IMR-90 (cell line): ENCODE measurements at regions of chr17 and their contacts with region 1.

Region 1: GRCh38 chr17:81187586-81188490 is 21.8 kb upstream of the AATK start:
- DNase-seq: no peak
- ATAC-seq: no peak
- H3K4me3 ChIP-seq: no peak overlapping the region
- H3K27ac ChIP-seq: no peak overlapping the region
- H3K4me1 ChIP-seq: no peaks in the 10 kb centered on the region
- H3K27me3 ChIP-seq: peaks cover 6% of the 10 kb centered on the region; the same call in 1 of the 2 replicates
- CTCF ChIP-seq: no peak
- POLR2A ChIP-seq: no peak
- RAD21 ChIP-seq: no peak

Region 2: GRCh38 chr17:81241648-81242420 is 54.0 kb after region 1 on chr17:
- CTCF ChIA-PET with region 1: no interaction called
- POLR2A ChIA-PET with region 1: no interaction called
- dilution Hi-C with region 1: no loop called
- in situ Hi-C with region 1: no loop called
- intact Hi-C with region 1: no loop called
- DNase-seq: peak; percentile 13
- ATAC-seq: no peak
- H3K4me3 ChIP-seq: no peak overlapping the region
- H3K27ac ChIP-seq: no peak overlapping the region
- H3K4me1 ChIP-seq: peaks cover 17% of the 10 kb centered on the region
- H3K27me3 ChIP-seq: no peaks in the 10 kb centered on the region
- CTCF ChIP-seq: peak; percentile 65
- POLR2A ChIP-seq: no peak
- RAD21 ChIP-seq: peak; percentile 72

Region 3: DNA sequence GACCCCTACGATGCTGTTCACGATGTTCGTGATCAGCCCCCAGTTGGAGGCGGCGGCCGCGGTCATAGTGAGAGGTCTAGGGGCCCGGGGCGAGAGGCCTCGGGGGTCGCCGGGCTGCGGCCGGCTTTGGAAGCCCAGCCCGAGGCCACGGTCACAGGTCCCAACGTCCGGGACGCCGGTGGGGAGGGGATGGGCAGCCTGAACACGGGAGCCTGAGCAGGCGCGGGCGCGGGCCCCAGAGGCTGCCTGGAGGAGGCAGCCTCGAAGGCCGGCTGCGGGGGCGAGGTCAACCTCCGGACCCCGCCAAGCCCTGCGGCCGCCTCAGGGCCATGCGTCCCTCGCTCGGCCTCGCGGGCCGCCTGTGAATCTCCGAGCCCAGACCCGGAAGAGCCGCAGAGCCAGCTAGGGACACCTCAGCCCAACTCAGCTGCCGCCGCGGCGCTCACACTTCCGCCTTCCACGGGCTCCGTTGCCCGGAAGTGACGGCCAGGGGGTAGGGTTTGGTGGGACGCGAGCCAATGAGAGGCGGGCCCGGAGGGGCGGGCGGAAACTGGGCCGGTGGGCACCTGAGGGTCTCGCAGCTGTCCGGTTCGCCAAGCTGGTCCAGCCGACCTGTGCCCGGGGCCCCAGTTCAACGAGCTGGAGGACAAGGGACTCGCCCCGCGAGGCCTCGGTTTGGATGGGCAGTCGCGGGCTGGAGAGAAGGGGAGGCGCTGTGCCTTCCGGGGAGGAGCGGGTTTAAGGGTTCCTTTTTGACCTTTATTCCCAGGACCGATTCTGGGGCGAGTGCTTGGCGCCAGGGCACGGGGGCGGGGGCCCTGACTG is 107.2 kb after region 1 on chr17 and contains the start of gene SLC38A10:
- CTCF ChIA-PET with region 1: no interaction called
- POLR2A ChIA-PET with region 1: interaction called, 18 read pairs
- dilution Hi-C with region 1: no loop called
- in situ Hi-C with region 1: no loop called
- intact Hi-C with region 1: no loop called
- DNase-seq: peak; percentile 74
- ATAC-seq: peak; percentile 94
- H3K4me3 ChIP-seq: peak within 1 kb of the TSS; percentile 73
- H3K27ac ChIP-seq: peak within 1 kb of the TSS; percentile 90
- H3K4me1 ChIP-seq: peaks cover 4% of the 10 kb centered on the region
- H3K27me3 ChIP-seq: no peaks in the 10 kb centered on the region
- CTCF ChIP-seq: no peak
- POLR2A ChIP-seq: peak; percentile 91
- RAD21 ChIP-seq: no peak
- total RNA-seq, gene SLC38A10: 12.7 and 14.2 TPM in 2 replicates

Region 4: DNA sequence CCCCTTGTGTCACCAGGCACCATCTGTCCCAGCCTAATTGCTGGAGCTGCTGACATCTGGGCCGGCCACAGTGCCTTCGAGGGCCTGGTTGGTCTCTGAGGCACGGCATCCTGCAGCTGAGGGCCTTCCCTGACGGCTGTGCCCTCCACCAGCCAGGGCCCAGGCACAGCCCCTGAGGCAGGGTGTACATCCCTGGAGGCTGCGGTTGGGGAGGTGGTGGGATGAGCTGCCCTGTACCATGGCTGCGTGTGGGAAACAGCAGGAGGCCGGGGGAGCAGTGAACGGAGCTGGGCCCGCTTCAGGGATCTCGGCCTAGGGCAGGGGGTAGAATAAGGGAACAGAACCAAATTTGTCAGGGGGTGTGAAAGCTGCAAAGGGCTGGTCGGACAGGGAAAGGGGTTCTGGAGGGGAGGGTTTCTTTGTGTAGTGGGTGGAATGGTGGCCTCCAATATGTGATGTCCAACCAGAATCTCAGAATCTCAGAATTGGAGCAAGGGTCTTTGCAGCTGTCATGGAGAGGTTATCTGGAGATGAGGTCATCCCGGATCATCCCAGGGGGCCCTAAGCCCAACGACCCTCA is 117.3 kb after region 1 on chr17:
- CTCF ChIA-PET with region 1: no interaction called
- POLR2A ChIA-PET with region 1: no interaction called
- dilution Hi-C with region 1: no loop called
- in situ Hi-C with region 1: no loop called
- intact Hi-C with region 1: no loop called
- DNase-seq: no peak
- ATAC-seq: no peak
- H3K4me3 ChIP-seq: no peak overlapping the region
- H3K27ac ChIP-seq: no peak overlapping the region
- H3K4me1 ChIP-seq: peaks cover 6% of the 10 kb centered on the region; the same call in 1 of the 2 replicates
- H3K27me3 ChIP-seq: no peaks in the 10 kb centered on the region; the same call in 1 of the 2 replicates
- CTCF ChIP-seq: no peak
- POLR2A ChIP-seq: no peak
- RAD21 ChIP-seq: no peak